ENCODE measurements at regions of chr20 and their contacts with region 1.

Region 1: GRCh38 chr20:462199-462991 is at the start of gene TBC1D20:
- DNase-seq: peak; percentile 86 to 91 (median 90)
- ATAC-seq: peak; percentile 96 to 98 (median 98)
- H3K4me3 ChIP-seq: peak within 1 kb of the TSS; percentile 43 to 95 (median 86)
- H3K27ac ChIP-seq: peak within 1 kb of the TSS; percentile 81 to 98 (median 92)
- H3K4me1 ChIP-seq: peaks cover 10 to 48% (median 37%) of the 10 kb centered on the region in 12 donors
- H3K27me3 ChIP-seq: no peaks in the 10 kb centered on the region
- CTCF ChIP-seq: peak in 4 of 12 donors; percentile 24 to 41 (median 32)
- POLR2A ChIP-seq: peak; percentile 12 to 84
- total RNA-seq, gene TBC1D20: 19.0 to 38.9 (median 26.3) TPM

Region 2: GRCh38 chr20:347640-348484 is 114.5 kb before region 1 on chr20:
- intact Hi-C with region 1: loop called in 2 of 10 experiments (anchors 2 to 5 kb)
- DNase-seq: peak; percentile 93 to 96 (median 95)
- ATAC-seq: peak; percentile 81 to 90 (median 90)
- H3K4me3 ChIP-seq: peak overlapping the region; percentile 69 to 97 (median 82)
- H3K27ac ChIP-seq: peak overlapping the region; percentile 88 to 99 (median 95)
- H3K4me1 ChIP-seq: peaks cover 0 to 35% (median 11%) of the 10 kb centered on the region in 12 donors
- H3K27me3 ChIP-seq: no peaks in the 10 kb centered on the region
- CTCF ChIP-seq: no peak
- POLR2A ChIP-seq: peak in 1 of 2 donors; percentile 61

Region 3: GRCh38 chr20:825710-826421 is 363.5 kb after region 1 on chr20:
- intact Hi-C with region 1: no loop called
- DNase-seq: peak in 1 of 5 donors; percentile 9
- ATAC-seq: peak in 2 of 4 donors; percentile 18 to 34
- H3K4me3 ChIP-seq: no peak overlapping the region
- H3K27ac ChIP-seq: no peak overlapping the region
- H3K4me1 ChIP-seq: peaks cover 0 to 14% (median 5%) of the 10 kb centered on the region in 12 donors
- H3K27me3 ChIP-seq: no peaks in the 10 kb centered on the region
- CTCF ChIP-seq: no peak
- POLR2A ChIP-seq: no peak